ENCODE measurements at regions of chr1 and their contacts with region 1.

Region 1: DNA sequence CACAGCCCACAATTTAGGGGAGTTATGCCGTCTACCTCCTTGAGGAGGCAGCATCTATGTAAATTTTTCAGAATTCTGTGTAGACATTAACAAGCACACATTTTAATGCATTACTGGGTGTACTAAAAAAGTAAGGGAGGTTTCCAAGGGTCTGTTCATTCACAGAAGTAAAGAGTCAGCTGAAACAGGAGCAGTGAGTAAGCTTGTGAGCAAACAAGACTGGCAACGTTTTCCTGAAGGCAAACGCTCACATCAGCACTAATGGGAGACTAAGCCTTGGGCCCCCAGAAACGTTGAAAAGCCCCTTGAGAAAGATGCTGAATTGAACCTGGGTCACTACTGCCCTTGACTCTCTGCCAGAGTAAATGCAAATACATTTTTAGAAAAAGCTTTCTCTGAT is 25.7 kb downstream of the RPRD2 start:
- DNase-seq: no peak
- ATAC-seq: peak in 1 of 2 experiments; percentile 63; a peak in 4 of 6 replicates
- H3K4me3 ChIP-seq: no peak overlapping the region
- H3K27ac ChIP-seq: 0 out of 6 replicates have a peak overlapping the region, but pooled peaks of 1 of the 2 experiments have one; percentile 4
- H3K4me1 ChIP-seq: peaks cover 34% of the 10 kb centered on the region
- CTCF ChIP-seq: no peak
- EP300 ChIP-seq: no peak
- POLR2A ChIP-seq: no peak
- RAD21 ChIP-seq: no peak

Region 2: GRCh38 chr1:150352866-150353265 is 36.8 kb before region 1 on chr1:
- CTCF ChIA-PET with region 1: no interaction called
- POLR2A ChIA-PET with region 1: no interaction called
- DNase-seq: no peak
- ATAC-seq: no peak; a peak in 1 of 6 replicates
- H3K4me3 ChIP-seq: no peak overlapping the region
- H3K27ac ChIP-seq: no peak overlapping the region
- H3K4me1 ChIP-seq: no peaks in the 10 kb centered on the region
- CTCF ChIP-seq: no peak
- EP300 ChIP-seq: no peak
- POLR2A ChIP-seq: no peak
- RAD21 ChIP-seq: no peak

Region 3: GRCh38 chr1:150363426-150364230 is 26.0 kb before region 1 on chr1 and contains the start of gene RPRD2:
- CTCF ChIA-PET with region 1: no interaction called
- POLR2A ChIA-PET with region 1: interaction called, 11 read pairs
- DNase-seq: peak; percentile 99 to 100
- ATAC-seq: peak; percentile 89 to 94
- H3K4me3 ChIP-seq: peak within 1 kb of the TSS; percentile 68
- H3K27ac ChIP-seq: peak within 1 kb of the TSS; percentile 94
- H3K4me1 ChIP-seq: peaks cover 34% of the 10 kb centered on the region
- CTCF ChIP-seq: no peak
- EP300 ChIP-seq: no peak
- POLR2A ChIP-seq: peak; percentile 90
- RAD21 ChIP-seq: no peak
- polyA plus RNA-seq, gene RPRD2: 20.8 and 21.1 TPM in 2 replicates

Measured in A549 (cell line).